AG04450 (cell line): ENCODE measurements at regions of chr4 and their contacts with region 1.

Region 1: GRCh38 chr4:4524364-4524763 is 17.5 kb downstream of the STX18 start:
- DNase-seq: no peak
- H3K4me3 ChIP-seq: no peak overlapping the region
- H3K27ac ChIP-seq: no peak overlapping the region
- H3K27me3 ChIP-seq: no peaks in the 10 kb centered on the region
- CTCF ChIP-seq: peak; percentile 34; the same call in 1 of the 2 replicates

Region 2: GRCh38 chr4:4480685-4481398 is 43.5 kb before region 1 on chr4:
- CTCF ChIA-PET with region 1: interaction called, 15 read pairs
- POLR2A ChIA-PET with region 1: no interaction called
- DNase-seq: no peak
- H3K4me3 ChIP-seq: no peak overlapping the region
- H3K27ac ChIP-seq: no peak overlapping the region
- H3K27me3 ChIP-seq: no peaks in the 10 kb centered on the region
- CTCF ChIP-seq: peak; percentile 71

Region 3: GRCh38 chr4:4502694-4503311 is 21.6 kb before region 1 on chr4:
- CTCF ChIA-PET with region 1: interaction called, 46 read pairs
- POLR2A ChIA-PET with region 1: no interaction called
- DNase-seq: no peak
- H3K4me3 ChIP-seq: peak overlapping the region; percentile 20
- H3K27ac ChIP-seq: peak overlapping the region; percentile 11
- H3K27me3 ChIP-seq: no peaks in the 10 kb centered on the region
- CTCF ChIP-seq: no peak

Region 4: GRCh38 chr4:4541661-4542570 is 17.6 kb after region 1 on chr4 and contains the start of gene STX18:
- CTCF ChIA-PET with region 1: interaction called, 24 read pairs
- POLR2A ChIA-PET with region 1: no interaction called
- DNase-seq: peak; percentile 71
- H3K4me3 ChIP-seq: peak within 1 kb of the TSS; percentile 94
- H3K27ac ChIP-seq: peak within 1 kb of the TSS; percentile 88
- H3K27me3 ChIP-seq: no peaks in the 10 kb centered on the region
- CTCF ChIP-seq: no peak
- polyA plus RNA-seq, gene STX18: 23.9 and 27.0 TPM in 2 replicates

Region 5: GRCh38 chr4:4585012-4585670 is 60.8 kb after region 1 on chr4:
- CTCF ChIA-PET with region 1: interaction called, 12 read pairs
- POLR2A ChIA-PET with region 1: no interaction called
- DNase-seq: peak; percentile 51
- H3K4me3 ChIP-seq: no peak overlapping the region
- H3K27ac ChIP-seq: peak overlapping the region; percentile 80
- H3K27me3 ChIP-seq: no peaks in the 10 kb centered on the region
- CTCF ChIP-seq: no peak

Region 6: DNA sequence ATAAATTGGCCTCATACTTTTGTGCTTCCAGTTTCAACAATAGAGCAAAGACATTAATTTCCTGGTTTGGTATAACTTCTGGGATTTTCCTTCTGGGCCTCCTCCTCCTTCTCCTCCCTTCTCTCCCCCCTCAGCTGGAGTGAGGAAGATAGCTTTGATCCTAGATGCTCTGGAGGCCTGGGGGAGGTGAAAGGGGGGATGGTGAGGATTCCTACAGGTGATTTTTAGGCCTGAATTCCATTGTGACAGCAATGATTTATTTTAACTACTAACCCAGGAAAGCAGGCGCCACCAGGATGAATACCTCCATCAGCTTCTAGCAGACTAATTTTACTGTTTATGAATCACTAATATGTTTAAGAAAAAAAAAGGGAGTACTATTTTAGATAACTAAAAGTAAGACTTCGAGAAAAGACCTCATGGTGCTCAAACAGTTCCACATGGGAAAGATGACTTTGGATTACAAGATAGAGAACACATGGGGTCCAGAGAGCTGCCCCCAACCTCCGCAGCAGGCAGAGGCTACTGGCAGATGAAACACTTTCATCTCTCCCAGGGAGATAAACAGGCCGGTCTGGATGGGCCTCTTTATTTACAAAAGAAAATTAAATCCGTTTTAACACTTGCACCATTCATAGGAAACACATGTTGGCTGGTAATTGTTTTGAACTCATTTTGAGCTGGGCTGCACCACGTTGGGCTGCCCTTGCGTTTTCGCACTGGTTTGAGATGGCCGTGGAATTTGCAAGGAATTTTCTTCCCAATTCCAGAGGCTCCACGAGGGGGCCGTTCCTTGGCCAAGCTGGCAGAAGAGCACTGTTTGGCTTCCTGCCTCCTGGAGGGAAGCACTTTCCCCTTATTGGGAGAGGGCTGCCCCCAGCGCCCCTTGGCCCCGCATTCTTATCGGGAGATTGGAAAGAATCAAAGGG is 142.6 kb after region 1 on chr4:
- CTCF ChIA-PET with region 1: interaction called, 13 read pairs
- POLR2A ChIA-PET with region 1: no interaction called
- DNase-seq: no peak
- H3K4me3 ChIP-seq: no peak overlapping the region
- H3K27ac ChIP-seq: peak overlapping the region; percentile 31
- H3K27me3 ChIP-seq: no peaks in the 10 kb centered on the region
- CTCF ChIP-seq: peak; percentile 20; the same call in 1 of the 2 replicates